Heart right ventricle (tissue), 16 donors: ENCODE measurements at regions of chr12 and their contacts with region 1.

Region 1: DNA sequence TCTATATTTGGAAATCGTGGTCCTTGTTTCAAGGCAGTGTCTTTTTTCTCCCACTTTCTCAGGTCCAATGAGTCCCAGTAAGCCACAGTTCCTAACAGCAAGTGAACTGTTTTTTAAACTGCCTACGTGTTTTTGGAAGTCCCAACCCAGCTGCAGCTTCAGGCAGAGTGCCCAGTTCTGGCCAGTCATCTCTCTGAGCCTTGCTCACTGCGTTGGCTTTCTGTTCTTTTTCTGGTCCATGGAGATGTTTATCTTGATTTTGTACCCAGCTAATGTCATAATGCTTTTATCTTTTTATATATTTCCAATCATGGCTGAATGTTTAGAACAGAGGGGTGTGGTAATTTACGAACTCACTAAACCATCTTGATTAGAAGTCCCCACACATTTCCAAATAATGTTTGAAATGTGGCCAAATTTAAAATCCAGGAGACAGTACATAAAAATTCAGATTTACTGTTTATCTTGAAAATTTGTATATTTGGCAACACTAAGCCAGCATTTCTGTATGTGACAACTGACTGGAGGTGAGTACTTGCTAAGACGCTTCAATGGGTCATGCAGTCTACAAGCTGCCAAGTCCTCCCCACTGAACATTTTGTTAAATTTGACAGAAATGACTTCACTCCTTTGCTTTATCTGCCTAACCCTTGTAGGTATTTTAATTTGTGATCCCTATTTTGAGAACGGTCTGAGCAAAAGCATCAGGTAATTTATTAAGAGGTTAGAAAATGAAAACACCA is 46.1 kb upstream of the OTOGL start:
- DNase-seq: peak; percentile 58 to 65
- ATAC-seq: peak in 6 of 8 donors; percentile 72 to 83 (median 78)
- H3K4me3 ChIP-seq: no peak overlapping the region
- H3K27ac ChIP-seq: peak overlapping the region in 4 of 10 donors; percentile 16 to 49 (median 24)
- H3K4me1 ChIP-seq: peaks cover 0 to 29% (median 12%) of the 10 kb centered on the region in 9 donors
- H3K27me3 ChIP-seq: no peaks in the 10 kb centered on the region
- CTCF ChIP-seq: no peak

Region 2: GRCh38 chr12:79988368-79988767 is 64.9 kb before region 1 on chr12:
- intact Hi-C with region 1: no loop called
- DNase-seq: no peak
- ATAC-seq: no peak
- H3K4me3 ChIP-seq: no peak overlapping the region
- H3K27ac ChIP-seq: no peak overlapping the region
- H3K4me1 ChIP-seq: peaks cover 0 to 11% (median 0%) of the 10 kb centered on the region in 9 donors
- H3K27me3 ChIP-seq: no peaks in the 10 kb centered on the region
- CTCF ChIP-seq: no peak

Region 3: GRCh38 chr12:80178846-80179245 is 125.6 kb after region 1 on chr12:
- intact Hi-C with region 1: loop called in 1 of 10 experiments (anchors 10 kb)
- DNase-seq: no peak
- ATAC-seq: no peak
- H3K4me3 ChIP-seq: no peak overlapping the region
- H3K27ac ChIP-seq: no peak overlapping the region
- H3K4me1 ChIP-seq: no peaks in the 10 kb centered on the region
- H3K27me3 ChIP-seq: no peaks in the 10 kb centered on the region
- CTCF ChIP-seq: no peak